ENCODE measurements at regions of chr12 and their contacts with region 1.

Region 1: GRCh38 chr12:16636435-16637055 is 30.6 kb upstream of the LMO3 start:
- DNase-seq: peak; percentile 69
- H3K4me3 ChIP-seq: peak overlapping the region; percentile 11
- H3K27ac ChIP-seq: peak overlapping the region; percentile 94
- H3K4me1 ChIP-seq: peaks cover 36% of the 10 kb centered on the region
- CTCF ChIP-seq: no peak

Region 2: DNA sequence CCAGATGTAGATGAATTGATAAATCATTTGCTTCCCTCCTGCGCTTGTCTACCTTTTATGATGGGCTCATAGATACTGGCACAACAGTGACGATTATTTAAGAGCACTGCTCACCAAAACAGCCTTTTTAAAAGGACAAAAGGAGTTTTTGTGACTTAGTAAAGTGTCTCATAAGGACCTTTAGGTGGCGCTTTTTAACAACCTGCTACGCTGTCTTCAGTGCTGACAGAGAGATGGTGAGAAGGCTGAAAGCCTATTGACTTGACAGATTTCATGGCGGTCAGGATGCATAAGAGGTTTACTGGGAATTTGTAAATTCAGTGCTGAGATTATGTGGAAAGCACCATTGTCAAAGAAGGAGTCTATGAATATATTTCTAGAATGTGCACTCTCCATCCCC is 446.7 kb before region 1 on chr12:
- CTCF ChIA-PET with region 1: no interaction called
- POLR2A ChIA-PET with region 1: interaction called, 3 read pairs
- intact Hi-C with region 1: loop called (anchors 10 kb)
- DNase-seq: peak; percentile 67
- H3K4me3 ChIP-seq: no peak overlapping the region
- H3K27ac ChIP-seq: no peak overlapping the region
- H3K4me1 ChIP-seq: peaks cover 9% of the 10 kb centered on the region
- CTCF ChIP-seq: peak; percentile 78

Region 3: GRCh38 chr12:16612647-16613046 is 23.9 kb before region 1 on chr12:
- CTCF ChIA-PET with region 1: no interaction called
- POLR2A ChIA-PET with region 1: interaction called, 31 read pairs
- intact Hi-C with region 1: loop called (anchors 2 kb)
- DNase-seq: no peak
- H3K4me3 ChIP-seq: peak overlapping the region; percentile 77
- H3K27ac ChIP-seq: no peak overlapping the region
- H3K4me1 ChIP-seq: peaks cover 68% of the 10 kb centered on the region
- CTCF ChIP-seq: no peak

Region 4: DNA sequence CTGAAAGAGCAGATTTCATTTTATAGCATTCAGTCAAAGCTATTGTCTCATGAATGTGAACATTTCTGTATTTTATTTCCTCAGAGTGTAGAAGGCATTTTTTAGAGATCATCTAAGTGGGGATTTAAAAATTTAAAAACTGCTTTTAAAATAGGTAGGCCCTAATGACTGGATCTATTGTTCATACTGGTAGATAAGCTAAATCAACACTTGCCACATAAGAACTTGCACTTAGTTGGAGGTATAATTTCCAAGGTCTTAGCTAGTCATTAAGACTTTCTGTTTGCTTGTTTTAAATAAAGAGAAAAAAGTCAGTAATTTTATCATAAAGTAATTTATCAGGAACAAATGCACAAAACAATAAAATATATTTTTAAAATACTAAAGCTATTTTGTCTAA is 44.7 kb after region 1 on chr12:
- CTCF ChIA-PET with region 1: no interaction called
- POLR2A ChIA-PET with region 1: no interaction called
- intact Hi-C with region 1: no loop called
- DNase-seq: no peak
- H3K4me3 ChIP-seq: no peak overlapping the region
- H3K27ac ChIP-seq: no peak overlapping the region
- H3K4me1 ChIP-seq: no peaks in the 10 kb centered on the region
- CTCF ChIP-seq: no peak

Measured in OCI-LY7 (cell line).